Sigmoid colon (tissue), 7 donors: ENCODE measurements at regions of chr3 and their contacts with region 1.

Region 1: GRCh38 chr3:9715764-9716437 is 12.3 kb downstream of the CPNE9 start:
- DNase-seq: peak; percentile 94
- H3K4me3 ChIP-seq: no peak overlapping the region
- H3K27ac ChIP-seq: peak overlapping the region; percentile 68 to 80 (median 72)
- H3K4me1 ChIP-seq: peaks cover 0 to 19% (median 10%) of the 10 kb centered on the region in 4 donors
- H3K27me3 ChIP-seq: no peaks in the 10 kb centered on the region
- CTCF ChIP-seq: peak; percentile 74 to 81 (median 79)
- EP300 ChIP-seq: no peak
- POLR2A ChIP-seq: no peak

Region 2: GRCh38 chr3:9602620-9603019 is 113.3 kb before region 1 on chr3:
- intact Hi-C with region 1: no loop called
- DNase-seq: no peak
- H3K4me3 ChIP-seq: no peak overlapping the region
- H3K27ac ChIP-seq: no peak overlapping the region
- H3K4me1 ChIP-seq: peaks cover 0 to 8% (median 3%) of the 10 kb centered on the region in 4 donors
- H3K27me3 ChIP-seq: peaks cover 0 to 14% (median 0%) of the 10 kb centered on the region in 3 donors
- CTCF ChIP-seq: no peak
- EP300 ChIP-seq: no peak
- POLR2A ChIP-seq: no peak

Region 3: DNA sequence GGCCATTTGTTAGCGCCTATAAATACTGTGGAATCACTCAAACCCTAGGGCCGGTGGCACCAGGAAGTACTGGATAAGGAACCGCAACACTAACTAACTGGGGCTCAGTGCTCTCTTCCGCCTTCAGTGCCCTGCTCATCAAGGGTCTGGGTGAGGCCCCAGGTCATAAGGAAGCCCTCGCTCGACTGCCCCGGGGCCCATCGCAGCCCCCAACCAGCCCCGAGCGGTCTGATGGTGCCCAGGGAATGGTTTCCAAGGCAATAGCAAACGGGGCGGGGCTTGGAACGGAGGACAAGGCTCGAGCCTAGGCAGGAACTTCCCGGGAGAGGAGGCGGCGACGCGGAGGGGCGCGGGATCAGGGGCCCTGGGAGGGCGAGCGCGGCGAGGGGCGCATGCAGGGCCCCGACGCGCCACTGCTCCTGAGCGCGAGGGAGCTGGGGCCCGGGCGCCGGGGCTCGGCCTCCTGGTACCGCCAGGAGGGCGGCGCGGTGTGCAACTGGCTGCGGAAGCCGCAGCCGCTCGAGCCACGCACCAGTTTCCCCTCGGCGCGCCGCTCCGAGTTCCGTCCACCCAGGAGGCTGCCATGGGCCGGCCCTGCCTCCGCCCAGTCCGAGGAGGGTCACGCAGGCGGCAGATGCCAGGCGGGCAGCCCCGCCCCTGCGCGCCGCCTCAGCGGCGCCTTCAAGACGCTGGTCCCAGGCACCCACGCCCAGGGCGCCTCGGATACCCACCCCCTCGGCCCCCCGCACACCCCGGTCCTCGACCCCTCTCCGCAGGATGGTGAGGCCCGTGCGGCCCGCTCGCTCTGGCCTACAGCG is 93.9 kb after region 1 on chr3 and contains the start of gene TTLL3:
- intact Hi-C with region 1: loop called (anchors 5 kb)
- DNase-seq: peak; percentile 92
- H3K4me3 ChIP-seq: peak within 1 kb of the TSS; percentile 54 to 92 (median 90)
- H3K27ac ChIP-seq: peak within 1 kb of the TSS; percentile 95 to 98 (median 96)
- H3K4me1 ChIP-seq: peaks cover 0 to 17% (median 13%) of the 10 kb centered on the region in 4 donors
- H3K27me3 ChIP-seq: no peaks in the 10 kb centered on the region
- CTCF ChIP-seq: no peak
- EP300 ChIP-seq: no peak
- POLR2A ChIP-seq: peak in 1 of 2 donors; percentile 21
- total RNA-seq, gene TTLL3: 32.9 to 117 (median 45.1) TPM

Region 4: GRCh38 chr3:10738688-10739372 is 1022.9 kb after region 1 on chr3:
- intact Hi-C with region 1: loop called (anchors 5 kb)
- DNase-seq: peak; percentile 80
- H3K4me3 ChIP-seq: peak overlapping the region in 3 of 4 donors; percentile 23 to 34 (median 33)
- H3K27ac ChIP-seq: no peak overlapping the region
- H3K4me1 ChIP-seq: peaks cover 0 to 9% (median 4%) of the 10 kb centered on the region in 4 donors
- H3K27me3 ChIP-seq: peaks cover 0 to 62% (median 33%) of the 10 kb centered on the region in 3 donors
- CTCF ChIP-seq: peak; percentile 59 to 89 (median 76)
- EP300 ChIP-seq: no peak
- POLR2A ChIP-seq: no peak